BJ (cell line): ENCODE measurements at regions of chr4 and their contacts with region 1.

Region 1: DNA sequence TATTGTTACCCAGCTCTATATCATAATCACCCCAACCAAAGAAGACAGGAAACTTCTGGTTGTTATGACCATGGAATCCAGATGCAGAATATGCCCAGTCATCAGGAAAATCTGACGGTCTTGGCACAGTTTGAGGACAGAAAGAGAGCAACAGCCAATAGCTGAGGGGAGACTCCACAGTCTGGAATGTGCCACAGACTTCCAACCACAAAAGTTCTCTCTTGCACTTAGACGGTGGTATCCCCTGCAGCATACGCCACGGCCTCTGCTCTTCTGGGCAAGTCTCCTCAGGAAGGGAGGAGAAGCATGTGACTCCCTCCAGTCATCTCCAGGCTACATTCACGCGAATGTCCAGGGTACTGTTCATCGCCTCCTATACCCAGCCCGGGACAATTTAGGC is 18.4 kb downstream of the ZNF827 start:
- DNase-seq: peak; percentile 81
- H3K4me3 ChIP-seq: no peak overlapping the region
- H3K27me3 ChIP-seq: no peaks in the 10 kb centered on the region
- CTCF ChIP-seq: no peak

Region 2: DNA sequence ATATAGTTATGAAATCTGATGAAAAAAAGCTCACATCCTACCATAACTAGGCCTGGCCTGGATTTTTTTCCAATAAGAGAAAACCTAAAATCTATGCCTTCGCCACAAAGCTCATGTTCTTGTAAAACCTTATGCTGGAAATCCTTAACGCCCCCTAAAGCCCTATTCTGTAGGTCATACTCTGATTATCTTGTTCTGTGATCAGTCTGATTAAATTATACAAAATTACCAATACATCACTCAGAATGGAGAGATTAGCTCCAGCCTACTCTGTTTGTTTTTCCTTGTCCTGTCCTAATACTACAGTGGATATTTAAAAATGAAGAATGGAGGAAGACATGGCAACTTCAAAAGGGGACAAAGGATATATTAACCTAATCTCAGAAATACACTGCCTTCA is 11.2 kb after region 1 on chr4:
- CTCF ChIA-PET with region 1: interaction called, 3 read pairs
- POLR2A ChIA-PET with region 1: interaction called, 19 read pairs
- DNase-seq: no peak
- H3K4me3 ChIP-seq: no peak overlapping the region
- H3K27me3 ChIP-seq: no peaks in the 10 kb centered on the region
- CTCF ChIP-seq: no peak

Region 3: GRCh38 chr4:146155152-146155724 is 235.0 kb after region 1 on chr4:
- CTCF ChIA-PET with region 1: no interaction called
- POLR2A ChIA-PET with region 1: interaction called, 13 read pairs
- DNase-seq: no peak
- H3K4me3 ChIP-seq: no peak overlapping the region
- H3K27me3 ChIP-seq: no peaks in the 10 kb centered on the region; the same call in 1 of the 2 replicates
- CTCF ChIP-seq: no peak